Endothelial cell of umbilical vein (primary cell): ENCODE measurements at regions of chr9 and their contacts with region 1.

Region 1: DNA sequence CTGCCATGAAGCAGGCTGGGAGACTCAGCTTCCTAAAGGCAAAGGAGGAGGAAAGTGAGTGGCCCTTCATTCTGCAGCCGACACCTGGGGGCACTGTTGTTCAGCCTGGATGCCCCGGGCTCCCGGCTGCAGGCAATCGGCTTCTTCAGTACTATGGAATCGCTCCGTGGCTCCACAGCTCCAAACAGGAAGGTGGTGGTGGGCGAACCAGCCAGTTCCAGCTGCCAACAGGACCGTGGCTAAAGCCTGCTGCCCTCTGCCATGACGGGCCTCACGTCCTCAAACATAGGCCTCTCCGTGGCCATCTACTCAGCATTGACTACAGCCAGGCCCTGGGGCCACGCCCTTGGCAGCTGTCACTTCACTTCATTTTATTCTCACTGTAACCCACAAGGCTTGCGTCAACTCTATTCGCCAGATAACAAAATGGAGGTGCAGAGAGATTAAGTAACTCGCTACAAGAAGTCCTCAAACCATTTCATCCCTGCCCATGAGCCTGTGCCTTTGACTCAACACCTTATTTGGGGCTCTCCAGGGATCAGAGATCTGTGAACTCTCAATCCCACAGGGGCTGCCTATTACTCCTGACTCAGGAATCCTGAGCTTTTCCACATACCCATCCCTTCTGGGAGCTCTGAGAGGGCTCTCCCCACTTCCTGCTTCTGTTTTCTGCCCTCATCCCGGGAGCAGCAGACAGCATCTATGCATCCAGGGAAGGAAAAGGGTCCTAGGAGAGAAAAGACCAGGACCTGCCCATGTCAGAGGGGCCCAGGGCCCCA is 38.0 kb downstream of the PAX5 start:
- DNase-seq: peak; percentile 68
- H3K4me3 ChIP-seq: no peak overlapping the region
- H3K27ac ChIP-seq: no peak overlapping the region
- H3K4me1 ChIP-seq: no peaks in the 10 kb centered on the region
- H3K27me3 ChIP-seq: peaks cover 10 to 18% of the 10 kb centered on the region in 2 experiments
- CTCF ChIP-seq: peak; percentile 68 to 90
- POLR2A ChIP-seq: no peak

Region 2: GRCh38 chr9:36985769-36986467 is 10.2 kb before region 1 on chr9:
- CTCF ChIA-PET with region 1: interaction called, 12 read pairs
- POLR2A ChIA-PET with region 1: no interaction called
- dilution Hi-C with region 1: no loop called
- intact Hi-C with region 1: no loop called
- DNase-seq: no peak
- H3K4me3 ChIP-seq: peak overlapping the region in 1 of 3 experiments; percentile 6
- H3K27ac ChIP-seq: no peak overlapping the region
- H3K4me1 ChIP-seq: no peaks in the 10 kb centered on the region
- H3K27me3 ChIP-seq: peaks cover 64 to 76% of the 10 kb centered on the region in 2 experiments
- CTCF ChIP-seq: no peak
- POLR2A ChIP-seq: no peak

Region 3: DNA sequence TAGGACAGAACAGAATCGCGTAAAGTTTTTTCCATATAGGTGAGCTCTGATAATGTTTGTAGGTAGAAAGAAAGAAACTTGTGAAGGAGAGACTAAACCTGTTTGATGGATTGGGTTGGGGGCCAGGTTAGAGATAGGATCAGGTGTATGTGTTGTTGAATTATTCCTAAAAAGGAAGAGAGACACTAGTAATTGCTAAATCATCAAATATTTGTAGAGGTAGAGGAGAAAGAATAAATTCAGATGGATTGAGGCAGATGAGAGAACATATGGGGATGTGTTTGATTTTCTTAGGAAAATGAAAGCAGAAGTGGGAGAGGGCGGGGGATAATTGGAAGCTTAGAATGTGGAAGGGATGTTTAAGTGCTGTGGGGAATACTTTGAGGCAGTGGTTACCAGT is 131.9 kb after region 1 on chr9:
- CTCF ChIA-PET with region 1: no interaction called
- POLR2A ChIA-PET with region 1: no interaction called
- dilution Hi-C with region 1: no loop called
- intact Hi-C with region 1: no loop called
- DNase-seq: no peak
- H3K4me3 ChIP-seq: no peak overlapping the region
- H3K27ac ChIP-seq: no peak overlapping the region
- H3K4me1 ChIP-seq: no peaks in the 10 kb centered on the region
- H3K27me3 ChIP-seq: no peaks in the 10 kb centered on the region
- CTCF ChIP-seq: no peak
- POLR2A ChIP-seq: no peak

Region 4: GRCh38 chr9:37191403-37192089 is 195.4 kb after region 1 on chr9:
- CTCF ChIA-PET with region 1: no interaction called
- POLR2A ChIA-PET with region 1: no interaction called
- dilution Hi-C with region 1: no loop called
- intact Hi-C with region 1: loop called (anchors 5 kb)
- DNase-seq: no peak
- H3K4me3 ChIP-seq: no peak overlapping the region
- H3K27ac ChIP-seq: no peak overlapping the region
- H3K4me1 ChIP-seq: peaks cover 6% of the 10 kb centered on the region
- H3K27me3 ChIP-seq: no peaks in the 10 kb centered on the region
- CTCF ChIP-seq: no peak
- POLR2A ChIP-seq: no peak

Region 5: DNA sequence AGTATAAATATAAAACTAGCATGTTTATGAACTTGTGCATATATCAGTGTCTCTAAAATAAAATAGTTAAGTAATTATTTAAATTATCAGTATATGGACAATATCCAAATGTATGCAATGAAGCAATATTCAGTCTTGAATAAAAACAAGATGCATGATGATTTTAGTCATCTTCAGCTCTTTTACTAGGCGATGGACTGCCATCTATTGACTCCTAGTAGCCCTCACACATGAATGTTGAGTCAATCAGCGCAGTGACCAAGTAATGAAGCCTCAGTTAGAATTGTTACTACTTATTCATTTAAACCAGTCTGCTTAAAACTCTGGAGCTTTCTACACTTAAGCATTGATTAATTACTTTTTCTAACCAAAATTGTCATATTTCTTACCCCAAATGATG is 333.5 kb after region 1 on chr9:
- CTCF ChIA-PET with region 1: interaction called, 61 read pairs
- POLR2A ChIA-PET with region 1: no interaction called
- dilution Hi-C with region 1: no loop called
- intact Hi-C with region 1: loop called (anchors 1 kb)
- DNase-seq: peak; percentile 38
- H3K4me3 ChIP-seq: no peak overlapping the region
- H3K27ac ChIP-seq: no peak overlapping the region
- H3K4me1 ChIP-seq: no peaks in the 10 kb centered on the region
- H3K27me3 ChIP-seq: no peaks in the 10 kb centered on the region
- CTCF ChIP-seq: peak in 1 of 2 donors; percentile 5
- POLR2A ChIP-seq: no peak

Region 6: GRCh38 chr9:37415011-37415719 is 419.0 kb after region 1 on chr9:
- CTCF ChIA-PET with region 1: interaction called, 28 read pairs
- POLR2A ChIA-PET with region 1: no interaction called
- dilution Hi-C with region 1: no loop called
- intact Hi-C with region 1: no loop called
- DNase-seq: peak; percentile 80
- H3K4me3 ChIP-seq: no peak overlapping the region
- H3K27ac ChIP-seq: no peak overlapping the region
- H3K4me1 ChIP-seq: no peaks in the 10 kb centered on the region
- H3K27me3 ChIP-seq: no peaks in the 10 kb centered on the region
- CTCF ChIP-seq: peak; percentile 66 to 85
- POLR2A ChIP-seq: no peak